Activated T-helper 1 cell treated with anti-CD3 and anti-CD28 coated beads, Interleukin-12 subunit alpha, Interleukin-12 subunit beta, Interleukin-2, Interleukin-4 antibody, amounts not matched to agents 30 ng/mL and 10 ng/mL and 1 ng/mL, durations not matched to agents 14 hours and 24 hours and 36 hours (primary cell): ENCODE measurements at regions of chr22 and their contacts with region 1.

Region 1: GRCh38 chr22:17084554-17085276 is at the start of gene IL17RA:
- DNase-seq: peak; percentile 94
- H3K4me3 Mint-ChIP-seq: peak within 1 kb of the TSS; percentile 93
- H3K27ac Mint-ChIP-seq: peak within 1 kb of the TSS; percentile 92
- H3K4me1 Mint-ChIP-seq: peaks cover 47% of the 10 kb centered on the region
- H3K27me3 Mint-ChIP-seq: peaks cover under 1% of the 10 kb centered on the region
- total RNA-seq, gene IL17RA: 23.2 and 23.6 TPM in 2 replicates

Region 2: DNA sequence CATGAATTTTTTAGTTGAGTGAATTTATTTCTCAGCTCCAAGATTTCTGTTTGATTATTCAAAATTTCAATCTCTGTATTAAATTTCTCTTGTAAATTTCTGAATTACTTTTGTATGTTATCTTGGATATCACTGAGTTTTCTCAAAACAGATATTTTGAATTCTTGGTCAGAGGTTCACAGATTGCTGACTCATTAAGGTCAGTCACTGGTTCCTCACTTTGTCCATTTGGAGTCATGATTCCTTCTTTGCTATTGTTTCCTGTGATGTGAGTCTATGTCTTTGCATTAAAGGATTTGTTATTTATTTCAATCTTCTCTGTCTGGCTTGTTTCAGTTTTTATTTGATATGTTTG is 10.1 kb before region 1 on chr22:
- intact Hi-C with region 1: loop called (anchors 1 kb)
- DNase-seq: no peak
- H3K4me3 Mint-ChIP-seq: no peak overlapping the region
- H3K27ac Mint-ChIP-seq: no peak overlapping the region
- H3K4me1 Mint-ChIP-seq: peaks cover 21% of the 10 kb centered on the region
- H3K27me3 Mint-ChIP-seq: peaks cover 36% of the 10 kb centered on the region

Region 3: DNA sequence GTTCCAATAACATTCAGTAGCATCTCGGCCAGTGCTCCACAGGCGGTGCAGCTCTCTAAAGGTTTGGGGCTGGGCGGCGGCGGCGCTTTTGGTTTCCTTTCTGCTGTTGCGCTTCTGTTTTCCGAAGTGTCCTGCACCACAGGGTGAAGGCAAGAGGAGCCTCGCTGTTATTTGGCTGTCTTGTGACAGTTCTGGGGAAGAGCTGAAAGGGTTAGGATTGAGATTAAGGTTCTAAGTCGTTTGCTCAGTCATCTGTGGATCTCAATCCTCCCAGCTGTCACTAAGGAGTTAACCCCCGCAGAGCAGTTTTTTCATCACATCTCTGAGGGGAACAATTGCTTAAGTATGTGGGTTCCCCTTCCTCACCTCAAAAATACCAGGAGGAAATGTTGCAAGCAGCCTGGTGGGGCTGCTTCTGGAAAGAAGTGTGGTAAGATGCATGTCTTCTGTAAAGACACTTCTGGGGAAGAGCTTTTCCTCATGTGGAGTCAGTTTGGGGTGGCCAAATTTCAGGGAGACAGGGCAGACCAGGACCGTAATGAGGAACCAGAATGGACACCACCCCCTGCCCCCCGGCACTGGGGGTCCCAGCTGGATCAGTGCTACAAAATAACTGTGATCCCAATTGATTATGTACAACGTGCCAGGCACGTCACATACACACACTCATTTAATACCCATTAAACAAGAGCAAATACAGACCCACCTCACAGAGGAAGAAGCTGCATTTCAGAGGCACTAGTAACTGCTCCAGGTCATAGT is 22.3 kb after region 1 on chr22:
- intact Hi-C with region 1: loop called (anchors 1 kb)
- DNase-seq: peak; percentile 37
- H3K4me3 Mint-ChIP-seq: peak overlapping the region; percentile 65
- H3K27ac Mint-ChIP-seq: peak overlapping the region; percentile 78
- H3K4me1 Mint-ChIP-seq: peaks cover 57% of the 10 kb centered on the region
- H3K27me3 Mint-ChIP-seq: no peaks in the 10 kb centered on the region

Region 4: DNA sequence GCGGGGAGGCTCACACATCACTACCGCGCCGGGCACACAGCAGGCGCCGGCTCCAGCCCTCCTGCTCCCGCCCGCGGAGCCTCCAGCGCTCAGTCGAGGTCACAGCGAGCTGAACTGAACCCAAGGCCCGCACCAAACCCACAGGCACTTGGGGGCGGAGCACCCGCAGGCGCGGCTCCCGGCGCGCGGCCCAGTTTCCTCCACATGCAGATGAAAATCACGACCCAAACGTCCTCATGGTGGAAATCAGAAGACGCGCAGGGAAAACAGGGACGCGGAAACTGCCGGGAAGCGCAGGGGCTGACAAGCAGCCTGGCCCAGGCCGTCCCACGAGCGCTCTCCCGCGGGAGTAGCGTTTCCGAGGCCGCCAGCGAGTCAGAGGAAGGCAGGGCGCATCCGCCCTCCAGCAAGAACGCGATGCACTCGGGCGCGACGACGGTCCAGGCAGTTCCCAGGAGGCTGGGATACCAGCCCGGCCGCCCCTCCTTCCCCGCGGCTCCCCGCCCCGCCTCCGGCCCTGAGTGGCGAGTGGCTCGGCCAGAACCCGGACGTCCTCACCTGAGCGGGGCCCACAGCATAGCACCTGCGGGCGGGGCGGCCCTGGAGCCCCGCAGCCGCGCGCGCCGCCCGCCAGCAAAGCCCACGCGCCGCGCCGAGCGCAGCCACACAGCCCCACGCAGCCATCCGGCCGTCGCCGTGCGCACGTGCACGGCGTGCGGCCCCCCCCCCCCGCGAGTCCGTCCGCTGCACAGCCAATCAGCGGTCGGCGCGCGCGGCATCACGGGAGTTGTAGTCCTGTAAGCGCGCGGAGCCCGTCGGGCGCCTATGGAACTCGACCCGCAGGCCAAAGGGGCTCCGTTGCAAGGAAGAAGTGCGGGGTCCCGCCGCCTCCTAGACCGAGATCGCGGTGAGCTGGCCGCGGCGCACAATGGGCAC is 74.1 kb after region 1 on chr22 and contains the start of gene HDHD5:
- intact Hi-C with region 1: loop called (anchors 1 kb)
- DNase-seq: peak; percentile 78
- H3K4me3 Mint-ChIP-seq: peak within 1 kb of the TSS; percentile 88
- H3K27ac Mint-ChIP-seq: peak within 1 kb of the TSS; percentile 75
- H3K4me1 Mint-ChIP-seq: peaks cover 25% of the 10 kb centered on the region
- H3K27me3 Mint-ChIP-seq: no peaks in the 10 kb centered on the region
- total RNA-seq, gene HDHD5: 39.1 and 42.1 TPM in 2 replicates

Region 5: GRCh38 chr22:17213976-17214375 is 129.3 kb after region 1 on chr22:
- intact Hi-C with region 1: no loop called
- DNase-seq: peak; percentile 31
- H3K4me3 Mint-ChIP-seq: no peak overlapping the region
- H3K27ac Mint-ChIP-seq: no peak overlapping the region
- H3K4me1 Mint-ChIP-seq: peaks cover 50% of the 10 kb centered on the region
- H3K27me3 Mint-ChIP-seq: no peaks in the 10 kb centered on the region

Region 6: GRCh38 chr22:17281440-17281841 is 196.7 kb after region 1 on chr22:
- intact Hi-C with region 1: loop called (anchors 5 kb)
- DNase-seq: peak; percentile 51
- H3K4me3 Mint-ChIP-seq: peak overlapping the region; percentile 77
- H3K27ac Mint-ChIP-seq: peak overlapping the region; percentile 97
- H3K4me1 Mint-ChIP-seq: peaks cover 31% of the 10 kb centered on the region
- H3K27me3 Mint-ChIP-seq: peaks cover 6% of the 10 kb centered on the region

Region 7: DNA sequence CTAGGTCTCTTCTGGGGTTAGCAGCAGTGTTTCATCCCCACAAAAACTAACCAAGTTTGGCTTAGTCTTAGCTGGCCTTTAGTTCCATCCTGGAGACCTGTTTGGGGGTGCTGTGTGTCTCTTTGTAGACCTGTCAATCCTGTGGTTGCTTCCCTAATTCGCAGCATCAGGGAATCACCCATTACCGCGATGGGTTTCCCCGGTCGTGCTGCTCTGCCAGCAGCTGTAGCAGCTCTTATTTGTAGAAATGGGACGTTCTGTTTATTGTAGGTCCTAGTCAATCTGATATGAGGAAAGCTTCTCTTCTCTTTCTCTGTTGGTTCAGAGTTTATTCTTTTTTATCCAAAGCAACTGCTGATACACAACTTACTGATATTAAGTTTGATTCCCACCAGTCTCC is 376.2 kb after region 1 on chr22:
- intact Hi-C with region 1: no loop called
- DNase-seq: no peak
- H3K4me3 Mint-ChIP-seq: no peak overlapping the region
- H3K27ac Mint-ChIP-seq: no peak overlapping the region
- H3K4me1 Mint-ChIP-seq: no peaks in the 10 kb centered on the region
- H3K27me3 Mint-ChIP-seq: peaks cover 18% of the 10 kb centered on the region

Region 8: GRCh38 chr22:17628304-17629166 is 543.8 kb after region 1 on chr22 and contains the start of gene ATP6V1E1:
- intact Hi-C with region 1: loop called (anchors 5 kb)
- DNase-seq: peak; percentile 95
- H3K4me3 Mint-ChIP-seq: peak within 1 kb of the TSS; percentile 94
- H3K27ac Mint-ChIP-seq: peak within 1 kb of the TSS; percentile 85
- H3K4me1 Mint-ChIP-seq: peaks cover 21% of the 10 kb centered on the region
- H3K27me3 Mint-ChIP-seq: peaks cover 5% of the 10 kb centered on the region
- total RNA-seq, gene ATP6V1E1: 120 and 128 TPM in 2 replicates